Endothelial cell of umbilical vein (primary cell): ENCODE measurements at regions of chr11 and their contacts with region 1.

Region 1: GRCh38 chr11:118602331-118602730 is 5.1 kb upstream of the PHLDB1 start:
- DNase-seq: no peak
- H3K4me3 ChIP-seq: no peak overlapping the region
- H3K27ac ChIP-seq: no peak overlapping the region
- H3K4me1 ChIP-seq: no peaks in the 10 kb centered on the region
- H3K27me3 ChIP-seq: no peaks in the 10 kb centered on the region
- CTCF ChIP-seq: no peak
- POLR2A ChIP-seq: no peak

Region 2: DNA sequence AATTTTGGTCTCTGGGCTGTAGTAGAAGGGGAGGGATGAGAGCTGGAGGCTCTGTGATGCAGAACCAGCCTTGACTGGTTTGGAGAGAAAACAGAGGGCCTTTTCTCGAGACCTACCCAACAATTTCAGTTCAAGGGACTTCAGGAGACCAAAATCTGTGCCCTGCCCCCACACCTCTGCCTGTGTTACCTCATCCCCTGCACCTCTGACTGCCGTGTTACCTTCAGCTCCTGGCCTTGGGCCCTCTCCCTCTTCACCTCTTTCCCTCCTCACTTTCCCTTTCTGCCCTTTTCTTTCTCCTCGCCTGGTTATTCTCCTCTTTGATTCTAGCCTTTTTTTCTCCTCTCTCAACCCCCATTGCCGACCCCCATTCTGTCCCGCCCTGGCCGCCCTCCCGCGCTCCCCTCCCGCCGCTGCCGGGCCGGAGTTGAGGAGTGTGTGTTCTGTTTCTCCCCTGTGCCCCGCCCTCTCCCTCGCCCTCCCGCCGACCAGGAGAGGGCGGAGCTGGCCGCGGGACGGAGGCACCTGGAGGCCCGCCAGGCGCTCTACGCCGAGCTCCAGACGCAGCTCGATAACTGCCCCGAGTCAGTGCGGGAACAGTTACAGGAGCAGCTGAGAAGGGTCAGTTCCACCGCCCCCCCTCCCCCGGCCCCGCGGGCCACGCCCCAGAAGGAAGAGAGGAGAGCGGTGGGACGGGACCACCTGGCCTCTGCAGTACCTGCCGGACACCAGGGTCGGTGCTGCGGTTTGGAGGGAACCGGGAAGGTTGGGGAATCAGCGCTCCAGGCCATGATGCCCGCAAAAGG is 32.3 kb after region 1 on chr11:
- CTCF ChIA-PET with region 1: interaction called, 8 read pairs
- POLR2A ChIA-PET with region 1: interaction called, 10 read pairs
- dilution Hi-C with region 1: no loop called
- intact Hi-C with region 1: no loop called
- DNase-seq: no peak
- H3K4me3 ChIP-seq: no peak overlapping the region
- H3K27ac ChIP-seq: no peak overlapping the region
- H3K4me1 ChIP-seq: no peaks in the 10 kb centered on the region
- H3K27me3 ChIP-seq: no peaks in the 10 kb centered on the region
- CTCF ChIP-seq: no peak
- POLR2A ChIP-seq: no peak

Region 3: GRCh38 chr11:118820412-118821357 is 218.4 kb after region 1 on chr11:
- CTCF ChIA-PET with region 1: no interaction called
- POLR2A ChIA-PET with region 1: no interaction called
- dilution Hi-C with region 1: no loop called
- intact Hi-C with region 1: no loop called
- DNase-seq: no peak
- H3K4me3 ChIP-seq: no peak overlapping the region
- H3K27ac ChIP-seq: no peak overlapping the region
- H3K4me1 ChIP-seq: no peaks in the 10 kb centered on the region
- H3K27me3 ChIP-seq: peaks cover 0 to 3% of the 10 kb centered on the region in 2 experiments
- CTCF ChIP-seq: no peak
- POLR2A ChIP-seq: no peak